ENCODE measurements at regions of chr3 and their contacts with region 1.

Region 1: GRCh38 chr3:172332256-172333041 is 115.8 kb downstream of the GHSR start:
- DNase-seq: peak; percentile 61
- ATAC-seq: peak; percentile 95
- H3K4me3 ChIP-seq: no peak overlapping the region
- H3K27ac ChIP-seq: no peak overlapping the region
- H3K4me1 ChIP-seq: no peaks in the 10 kb centered on the region
- H3K27me3 ChIP-seq: no peaks in the 10 kb centered on the region
- CTCF ChIP-seq: peak; percentile 80
- POLR2A ChIP-seq: no peak
- RAD21 ChIP-seq: peak; percentile 66

Region 2: GRCh38 chr3:171646357-171647133 is 685.9 kb before region 1 on chr3:
- CTCF ChIA-PET with region 1: no interaction called
- POLR2A ChIA-PET with region 1: no interaction called
- dilution Hi-C with region 1: no loop called
- in situ Hi-C with region 1: loop called (anchors 25 kb)
- intact Hi-C with region 1: no loop called
- DNase-seq: peak; percentile 80
- ATAC-seq: peak; percentile 90
- H3K4me3 ChIP-seq: no peak overlapping the region
- H3K27ac ChIP-seq: no peak overlapping the region
- H3K4me1 ChIP-seq: peaks cover 2% of the 10 kb centered on the region; the same call in 1 of the 2 replicates
- H3K27me3 ChIP-seq: no peaks in the 10 kb centered on the region
- CTCF ChIP-seq: peak; percentile 76
- POLR2A ChIP-seq: no peak
- RAD21 ChIP-seq: peak; percentile 83

Region 3: GRCh38 chr3:171916888-171917287 is 415.6 kb before region 1 on chr3:
- CTCF ChIA-PET with region 1: no interaction called
- POLR2A ChIA-PET with region 1: no interaction called
- dilution Hi-C with region 1: no loop called
- in situ Hi-C with region 1: no loop called
- intact Hi-C with region 1: no loop called
- DNase-seq: no peak
- ATAC-seq: no peak
- H3K4me3 ChIP-seq: no peak overlapping the region
- H3K27ac ChIP-seq: no peak overlapping the region
- H3K4me1 ChIP-seq: no peaks in the 10 kb centered on the region
- H3K27me3 ChIP-seq: no peaks in the 10 kb centered on the region
- CTCF ChIP-seq: no peak
- POLR2A ChIP-seq: no peak
- RAD21 ChIP-seq: no peak

Region 4: GRCh38 chr3:172054115-172054764 is 278.2 kb before region 1 on chr3:
- CTCF ChIA-PET with region 1: no interaction called
- POLR2A ChIA-PET with region 1: interaction called, 22 read pairs
- dilution Hi-C with region 1: no loop called
- in situ Hi-C with region 1: no loop called
- intact Hi-C with region 1: no loop called
- DNase-seq: no peak
- ATAC-seq: no peak
- H3K4me3 ChIP-seq: no peak overlapping the region
- H3K27ac ChIP-seq: 0 out of 2 replicates have a peak overlapping the region, but pooled peaks have one; percentile 10
- H3K4me1 ChIP-seq: peaks cover 15% of the 10 kb centered on the region
- H3K27me3 ChIP-seq: no peaks in the 10 kb centered on the region
- CTCF ChIP-seq: no peak
- POLR2A ChIP-seq: no peak
- RAD21 ChIP-seq: no peak

Region 5: DNA sequence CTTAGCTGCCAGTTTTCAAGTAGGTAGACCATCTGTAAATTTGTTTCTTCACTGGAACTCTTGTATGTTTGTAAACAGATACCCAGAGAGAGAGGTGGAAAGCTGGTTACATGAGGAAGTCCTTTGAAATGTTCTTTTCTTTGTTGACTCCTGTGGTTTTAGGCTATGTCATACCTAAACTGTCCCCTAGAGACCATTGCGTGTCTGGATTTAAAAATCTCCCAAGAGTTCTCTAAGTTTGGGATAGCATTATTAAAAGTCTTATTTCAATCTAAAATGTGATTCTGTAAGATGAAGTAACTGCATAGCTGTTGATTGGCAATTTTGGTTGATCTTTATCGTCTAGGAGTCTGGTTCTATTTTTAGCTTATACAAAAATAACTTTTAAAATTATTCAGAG is 11.4 kb before region 1 on chr3:
- CTCF ChIA-PET with region 1: interaction called, 11 read pairs
- POLR2A ChIA-PET with region 1: no interaction called
- dilution Hi-C with region 1: no loop called
- in situ Hi-C with region 1: no loop called
- intact Hi-C with region 1: no loop called
- DNase-seq: peak; percentile 20
- ATAC-seq: no peak
- H3K4me3 ChIP-seq: no peak overlapping the region
- H3K27ac ChIP-seq: no peak overlapping the region
- H3K4me1 ChIP-seq: peaks cover 30% of the 10 kb centered on the region
- H3K27me3 ChIP-seq: no peaks in the 10 kb centered on the region
- CTCF ChIP-seq: no peak
- POLR2A ChIP-seq: no peak
- RAD21 ChIP-seq: no peak

Region 6: DNA sequence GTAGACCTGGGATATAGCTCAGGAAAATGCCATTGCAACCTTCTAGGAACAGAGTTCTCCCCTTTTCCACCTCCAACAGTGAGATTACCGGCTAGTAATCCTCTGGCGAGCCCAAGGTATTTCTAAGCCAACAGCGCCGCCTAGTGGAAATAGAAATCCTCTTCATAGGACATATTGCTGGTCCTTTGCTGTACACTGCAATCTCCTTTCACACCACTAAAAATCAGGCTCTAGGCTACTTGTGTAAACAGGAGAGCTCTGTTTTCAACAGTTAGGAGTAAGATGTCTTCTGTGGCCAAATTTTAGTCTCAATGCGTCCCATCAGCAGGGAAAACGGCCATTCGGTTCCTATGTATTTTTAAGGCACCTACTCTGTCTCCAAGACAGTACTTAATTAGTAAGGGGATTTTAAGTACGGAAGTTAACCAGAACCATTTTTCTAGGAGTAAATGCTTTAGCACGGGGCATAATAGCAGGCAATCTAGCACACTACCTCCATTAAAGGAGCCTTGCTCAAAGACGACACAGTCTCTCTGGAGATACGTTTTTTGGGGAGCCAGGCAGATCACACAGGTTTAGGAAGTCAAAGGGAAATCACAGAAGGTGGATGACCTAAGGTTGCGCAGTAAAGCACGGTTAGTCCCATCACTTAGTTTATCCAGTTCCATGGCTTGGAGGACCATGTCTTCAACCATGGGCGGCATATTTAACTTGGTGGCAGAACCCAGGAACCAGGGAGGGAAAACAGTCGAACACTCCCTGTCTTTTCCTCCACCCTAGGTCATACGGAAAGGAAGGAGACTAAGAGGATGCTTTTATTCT is 334.6 kb after region 1 on chr3:
- CTCF ChIA-PET with region 1: no interaction called
- POLR2A ChIA-PET with region 1: no interaction called
- dilution Hi-C with region 1: no loop called
- in situ Hi-C with region 1: no loop called
- intact Hi-C with region 1: loop called (anchors 1 kb)
- DNase-seq: peak; percentile 83
- ATAC-seq: peak; percentile 96
- H3K4me3 ChIP-seq: no peak overlapping the region
- H3K27ac ChIP-seq: no peak overlapping the region
- H3K4me1 ChIP-seq: 0 out of 2 replicates have a peak, but pooled peaks cover 2% of the 10 kb centered on the region
- H3K27me3 ChIP-seq: no peaks in the 10 kb centered on the region
- CTCF ChIP-seq: peak; percentile 93
- POLR2A ChIP-seq: no peak
- RAD21 ChIP-seq: peak; percentile 93

Measured in IMR-90 (cell line).